HEK293 (cell line): ENCODE measurements at regions of chr22 and their contacts with region 1.

Region 1: DNA sequence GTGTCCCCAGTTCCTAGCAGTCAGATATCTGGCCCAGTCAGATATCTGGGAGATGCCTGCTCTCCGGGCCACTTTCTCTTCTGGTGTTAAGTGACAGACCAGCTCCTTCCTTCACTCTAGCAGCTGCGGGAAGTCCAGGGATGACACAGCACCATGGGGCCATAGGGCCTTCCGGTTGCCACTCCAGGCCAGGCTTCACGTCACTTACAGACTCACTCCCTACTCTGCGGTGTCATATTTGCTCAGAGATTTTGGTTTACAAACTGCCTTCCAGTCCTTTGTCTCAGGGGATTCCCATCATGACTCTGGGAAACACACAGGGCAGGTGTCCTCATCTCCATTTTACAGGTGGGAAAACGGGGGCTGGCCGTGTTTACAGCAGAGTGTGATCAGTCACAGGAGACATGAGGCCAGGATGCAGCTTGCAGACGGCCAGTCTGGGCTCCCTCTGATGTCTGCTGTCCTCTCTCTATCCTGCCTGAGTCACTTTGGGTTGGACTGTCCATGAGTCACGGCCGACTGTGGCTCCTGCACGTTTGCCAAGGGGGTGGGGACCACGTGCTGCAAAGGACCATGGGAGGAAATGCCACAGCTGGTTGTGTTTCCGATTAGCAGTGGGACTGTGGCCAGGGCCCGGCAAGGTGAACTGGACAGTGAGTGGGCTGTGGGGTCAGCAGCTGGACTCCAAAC is 8.2 kb upstream of the TBC1D22A start:
- H3K4me3 ChIP-seq: no peak overlapping the region
- H3K27ac ChIP-seq: no peak overlapping the region; the same call in 1 of the 2 replicates
- H3K4me1 ChIP-seq: no peaks in the 10 kb centered on the region
- CTCF ChIP-seq: no peak

Region 2: GRCh38 chr22:46774253-46774979 is 20.2 kb after region 1 on chr22:
- CTCF ChIA-PET with region 1: interaction called, 33 read pairs
- POLR2A ChIA-PET with region 1: interaction called, 10 read pairs
- H3K4me3 ChIP-seq: no peak overlapping the region
- H3K27ac ChIP-seq: peak overlapping the region; percentile 68
- H3K4me1 ChIP-seq: peaks cover 33% of the 10 kb centered on the region
- CTCF ChIP-seq: no peak

Region 3: GRCh38 chr22:46900549-46900948 is 146.3 kb after region 1 on chr22:
- CTCF ChIA-PET with region 1: no interaction called
- POLR2A ChIA-PET with region 1: interaction called, 14 read pairs
- H3K4me3 ChIP-seq: no peak overlapping the region
- H3K27ac ChIP-seq: no peak overlapping the region
- H3K4me1 ChIP-seq: no peaks in the 10 kb centered on the region
- CTCF ChIP-seq: no peak